ENCODE measurements at regions of chr6 and their contacts with region 1.

Region 1: DNA sequence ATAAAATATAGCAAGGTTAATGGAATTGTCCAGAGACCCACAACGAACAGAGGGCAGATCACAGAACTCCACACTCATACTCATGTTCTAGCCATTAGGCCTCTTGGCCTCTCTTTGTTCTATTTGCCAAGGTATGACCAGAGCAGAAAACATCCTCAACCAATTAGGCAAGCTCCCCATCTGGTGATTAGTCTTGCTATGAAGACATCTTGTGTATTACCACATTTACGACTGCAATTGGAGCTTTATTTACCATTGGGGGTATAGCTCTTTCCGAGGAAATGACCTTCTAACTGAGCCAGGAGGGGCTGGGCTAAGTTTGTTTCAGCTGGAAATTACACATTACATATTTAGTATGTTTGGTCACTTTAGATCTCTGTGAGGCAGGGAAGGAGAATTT is 593.9 kb downstream of the CD109 start:
- DNase-seq: no peak
- H3K4me3 ChIP-seq: no peak overlapping the region
- CTCF ChIP-seq: no peak
- POLR2A ChIP-seq: no peak

Region 2: DNA sequence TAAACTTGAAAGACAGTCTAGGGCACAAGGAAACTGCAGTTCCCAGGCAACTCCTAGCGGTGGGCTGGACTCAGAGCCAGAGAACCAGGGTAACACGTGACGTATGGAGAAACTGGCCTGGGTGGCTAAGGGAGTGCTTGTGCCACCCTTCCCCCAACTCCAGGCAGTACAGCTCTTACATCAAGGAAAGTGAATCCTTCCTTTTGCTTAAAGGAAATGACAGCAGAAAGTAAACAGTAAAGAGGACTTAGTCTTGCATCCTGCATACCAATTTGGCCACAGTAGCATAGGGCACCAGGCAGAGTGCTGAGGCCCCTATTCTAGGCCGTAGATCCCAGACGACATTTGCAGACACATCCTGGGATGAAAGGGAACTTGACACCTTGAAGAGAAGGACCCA is 271.1 kb before region 1 on chr6:
- intact Hi-C with region 1: no loop called
- DNase-seq: no peak
- H3K4me3 ChIP-seq: no peak overlapping the region
- CTCF ChIP-seq: no peak
- POLR2A ChIP-seq: no peak

Region 3: DNA sequence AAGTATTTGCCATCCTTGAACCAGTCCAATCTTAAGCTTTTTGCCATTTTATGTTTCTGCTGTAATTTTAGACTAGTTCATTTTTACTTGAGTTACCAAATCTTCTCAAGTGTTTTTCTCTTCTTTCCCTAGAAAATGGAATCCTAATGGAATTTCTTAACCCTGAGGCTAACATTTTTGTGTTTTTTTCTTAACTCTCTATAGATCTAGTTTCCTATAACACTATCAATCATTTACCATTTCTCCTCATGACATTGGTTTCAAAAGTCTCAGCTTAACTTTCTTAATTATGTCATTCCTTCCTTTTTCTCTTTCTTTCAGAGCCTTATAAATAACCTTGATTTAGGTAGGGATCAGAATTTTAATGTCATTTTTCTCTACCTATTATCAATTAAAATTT is 1366.6 kb after region 1 on chr6:
- intact Hi-C with region 1: loop called (anchors 5 kb)
- DNase-seq: no peak
- H3K4me3 ChIP-seq: no peak overlapping the region
- CTCF ChIP-seq: no peak
- POLR2A ChIP-seq: no peak